Posterior vena cava (tissue), 2 donors: ENCODE measurements at regions of chr13 and their contacts with region 1.

Region 1: DNA sequence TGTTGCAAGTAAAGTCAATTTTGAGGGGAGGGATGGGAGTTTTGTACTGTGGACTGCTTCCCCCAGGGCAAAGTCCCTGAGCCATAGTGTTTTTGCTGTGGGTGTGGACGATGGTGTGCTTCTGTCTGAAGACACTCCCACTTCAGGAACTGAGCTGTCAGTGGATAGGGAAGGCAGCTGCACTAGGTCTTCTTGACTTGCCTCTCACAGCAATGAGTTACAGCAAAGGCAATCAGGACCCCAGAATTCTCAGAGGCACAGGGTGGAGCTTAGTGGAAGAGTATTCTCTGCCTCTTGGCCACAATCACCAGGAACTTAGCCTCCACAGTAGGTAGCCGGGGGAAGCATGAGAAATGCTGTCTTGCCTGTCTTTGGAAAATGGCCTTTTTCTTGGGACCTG is 1416.6 kb upstream of the MIR17HG start:
- DNase-seq: no peak

Region 2: GRCh38 chr13:89627991-89628390 is 302.9 kb before region 1 on chr13:
- intact Hi-C with region 1: no loop called
- DNase-seq: no peak

Region 3: GRCh38 chr13:90872491-90873025 is 941.7 kb after region 1 on chr13:
- intact Hi-C with region 1: loop called in 1 of 2 experiments (anchors 10 kb)
- DNase-seq: no peak